HepG2 (cell line): ENCODE measurements at regions of chr17 and their contacts with region 1.

Region 1: DNA sequence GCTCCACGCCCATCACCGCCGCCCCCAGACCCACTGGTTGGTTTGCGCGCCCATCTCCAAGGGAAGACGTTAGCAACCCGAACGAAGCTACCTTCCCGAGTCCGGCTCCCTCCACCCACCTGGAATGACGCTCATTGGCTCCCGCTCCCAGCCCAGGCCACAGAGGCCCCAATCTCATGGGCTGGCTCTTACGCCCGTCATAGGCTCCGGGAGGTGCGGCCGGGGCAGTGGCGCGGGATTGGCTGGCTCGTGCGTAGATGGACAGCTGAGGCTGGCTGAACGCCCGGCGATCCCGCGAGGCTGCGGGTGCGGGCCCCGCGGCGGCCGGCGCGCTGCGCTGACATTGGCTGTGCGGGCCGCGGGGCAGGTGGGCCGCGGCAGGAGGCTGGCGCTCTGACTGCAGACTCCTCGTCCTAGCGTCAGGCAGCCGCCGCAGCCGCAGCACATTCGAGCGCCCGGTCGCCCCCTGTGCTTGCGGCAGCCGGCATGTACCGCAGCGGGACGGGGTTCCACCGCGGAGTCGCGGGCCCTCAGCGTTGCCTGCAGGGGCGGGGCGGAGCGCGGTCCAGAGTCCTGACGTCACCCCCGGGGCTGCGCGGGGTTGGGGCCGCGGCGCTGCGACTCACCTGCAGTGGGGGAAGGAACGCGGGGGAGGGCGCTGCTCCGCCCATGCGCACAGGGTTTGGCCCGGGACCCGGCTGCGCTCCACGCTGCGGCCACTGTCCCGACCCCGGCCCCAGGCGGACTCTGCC is 453 bp upstream of the MYH10 start:
- DNase-seq: peak; percentile 99
- ATAC-seq: peak; percentile 95
- H3K4me3 ChIP-seq: peak overlapping the region; percentile 71 to 99 (median 99)
- H3K27ac ChIP-seq: peak overlapping the region; percentile 89
- H3K4me1 ChIP-seq: peaks cover 51% of the 10 kb centered on the region
- H3K27me3 ChIP-seq: no peaks in the 10 kb centered on the region
- CTCF ChIP-seq: peak; percentile 72
- EP300 ChIP-seq: no peak; a peak in 1 of 4 replicates
- POLR2A ChIP-seq: peak; percentile 65 to 71
- RAD21 ChIP-seq: peak; percentile 70

Region 2: DNA sequence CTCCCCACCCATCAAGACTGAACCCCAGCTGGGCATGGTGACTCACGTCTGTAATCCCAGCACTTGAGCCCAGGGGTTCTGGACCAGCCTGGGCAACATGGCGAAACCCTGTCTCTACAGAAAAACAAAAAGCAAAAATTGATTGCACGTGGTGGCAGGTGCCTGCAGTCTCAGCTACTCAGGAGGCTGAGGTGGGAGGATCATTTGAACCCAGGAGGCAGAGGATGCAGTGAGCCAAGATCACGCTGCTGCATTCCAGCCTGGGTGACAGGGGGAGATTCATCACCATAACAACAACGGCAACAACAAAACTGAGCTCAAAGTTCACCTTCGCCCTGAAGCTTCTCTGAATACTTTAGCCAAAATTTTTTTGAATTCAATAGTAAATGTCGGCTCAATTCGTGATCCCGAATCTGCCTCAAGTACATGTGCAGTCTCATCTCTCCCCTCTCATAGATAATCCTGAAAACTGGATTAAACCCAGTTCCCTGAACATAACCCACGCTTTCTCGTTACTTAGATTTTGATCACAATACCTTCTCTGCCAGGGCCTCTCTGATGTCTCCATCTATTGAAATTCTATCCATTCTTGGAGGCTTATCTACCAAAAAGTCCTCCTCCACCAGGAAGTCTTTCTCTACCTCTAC is 13.0 kb after region 1 on chr17:
- CTCF ChIA-PET with region 1: no interaction called
- POLR2A ChIA-PET with region 1: interaction called, 17 read pairs
- in situ Hi-C with region 1: no loop called
- intact Hi-C with region 1: no loop called
- DNase-seq: peak; percentile 79
- ATAC-seq: peak; percentile 73
- H3K4me3 ChIP-seq: peak overlapping the region in 2 of 3 experiments; percentile 24 to 38; a peak in 2 of 6 replicates
- H3K27ac ChIP-seq: peak overlapping the region; percentile 54
- H3K4me1 ChIP-seq: peaks cover 75% of the 10 kb centered on the region
- H3K27me3 ChIP-seq: no peaks in the 10 kb centered on the region
- CTCF ChIP-seq: no peak
- EP300 ChIP-seq: peak; percentile 6 to 49; a peak in 1 of 4 replicates
- POLR2A ChIP-seq: no peak
- RAD21 ChIP-seq: no peak

Region 3: GRCh38 chr17:8681170-8681949 is 50.4 kb after region 1 on chr17:
- CTCF ChIA-PET with region 1: no interaction called
- POLR2A ChIA-PET with region 1: no interaction called
- in situ Hi-C with region 1: no loop called
- intact Hi-C with region 1: no loop called
- DNase-seq: no peak
- ATAC-seq: no peak
- H3K4me3 ChIP-seq: no peak overlapping the region
- H3K27ac ChIP-seq: no peak overlapping the region
- H3K4me1 ChIP-seq: no peaks in the 10 kb centered on the region
- H3K27me3 ChIP-seq: 0 out of 5 replicates have a peak, but pooled peaks cover 0 to 5% of the 10 kb centered on the region in 2 experiments
- CTCF ChIP-seq: no peak
- EP300 ChIP-seq: no peak
- POLR2A ChIP-seq: no peak
- RAD21 ChIP-seq: no peak